ENCODE measurements at regions of chr1 and their contacts with region 1.

Region 1: GRCh38 chr1:170670802-170671628 is 7.1 kb downstream of the PRRX1 start:
- DNase-seq: no peak
- H3K4me3 ChIP-seq: no peak overlapping the region
- H3K27ac ChIP-seq: peak overlapping the region; percentile 0 to 47
- H3K4me1 ChIP-seq: no peaks in the 10 kb centered on the region
- H3K27me3 ChIP-seq: no peaks in the 10 kb centered on the region
- CTCF ChIP-seq: peak in 3 of 4 experiments; percentile 29 to 37 (median 32)
- POLR2A ChIP-seq: no peak

Region 2: GRCh38 chr1:170729225-170730002 is 58.4 kb after region 1 on chr1:
- intact Hi-C with region 1: loop called (anchors 10 kb)
- DNase-seq: no peak
- H3K4me3 ChIP-seq: no peak overlapping the region
- H3K27ac ChIP-seq: no peak overlapping the region
- H3K4me1 ChIP-seq: no peaks in the 10 kb centered on the region
- H3K27me3 ChIP-seq: no peaks in the 10 kb centered on the region
- CTCF ChIP-seq: no peak
- POLR2A ChIP-seq: no peak

Region 3: DNA sequence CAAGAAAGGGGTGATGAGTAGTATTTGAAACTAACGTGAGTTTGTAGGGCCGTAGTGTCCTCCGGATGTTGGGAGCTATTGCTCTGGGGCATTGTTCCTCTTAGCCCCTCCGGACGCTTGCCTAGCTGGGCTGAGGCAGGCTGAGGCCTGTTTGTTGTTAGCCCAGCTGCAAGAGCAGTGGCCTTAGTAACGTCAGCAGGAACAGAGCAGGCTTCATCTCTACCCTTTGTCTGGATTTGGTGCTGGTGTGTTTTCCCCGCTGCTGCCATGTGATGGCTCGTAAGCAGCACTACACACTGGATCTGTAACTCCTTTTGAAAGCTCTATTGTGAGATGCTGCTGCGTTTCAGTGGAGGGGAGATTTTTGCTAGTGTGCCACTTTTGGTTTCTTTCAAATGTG is 1227.9 kb after region 1 on chr1:
- intact Hi-C with region 1: no loop called
- DNase-seq: peak; percentile 23
- H3K4me3 ChIP-seq: no peak overlapping the region
- H3K27ac ChIP-seq: peak overlapping the region in 1 of 2 donors; percentile 30
- H3K4me1 ChIP-seq: no peaks in the 10 kb centered on the region
- H3K27me3 ChIP-seq: no peaks in the 10 kb centered on the region
- CTCF ChIP-seq: no peak
- POLR2A ChIP-seq: no peak